A673 (cell line): ENCODE measurements at regions of chr7 and their contacts with region 1.

Region 1: GRCh38 chr7:16918288-16918895 is 36.6 kb upstream of the AGR3 start:
- DNase-seq: peak; percentile 78
- H3K4me3 ChIP-seq: no peak overlapping the region
- H3K27ac ChIP-seq: no peak overlapping the region
- H3K4me1 ChIP-seq: peaks cover 58% of the 10 kb centered on the region
- H3K27me3 ChIP-seq: no peaks in the 10 kb centered on the region
- CTCF ChIP-seq: peak; percentile 87

Region 2: DNA sequence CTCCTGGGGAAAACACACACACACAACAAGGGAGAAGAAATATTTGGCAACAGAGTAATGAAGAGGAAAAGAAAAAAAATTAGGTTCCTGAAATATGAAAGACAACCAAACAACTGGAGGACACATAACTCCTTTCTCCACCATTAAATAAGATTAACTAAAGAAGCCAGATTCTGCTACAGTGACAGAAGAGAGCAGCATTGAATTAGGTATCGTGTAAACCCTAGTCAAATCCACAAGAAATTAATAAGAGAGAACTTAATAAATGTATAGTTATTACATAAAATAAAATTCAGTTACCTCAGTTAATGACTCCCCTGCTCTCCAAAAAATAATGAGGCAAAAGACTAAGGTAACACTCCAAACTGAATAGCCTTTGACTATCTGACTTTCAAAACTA is 803.8 kb before region 1 on chr7:
- CTCF ChIA-PET with region 1: no interaction called
- POLR2A ChIA-PET with region 1: no interaction called
- intact Hi-C with region 1: loop called (anchors 10 kb)
- DNase-seq: peak; percentile 48
- H3K4me3 ChIP-seq: no peak overlapping the region
- H3K27ac ChIP-seq: no peak overlapping the region
- H3K4me1 ChIP-seq: no peaks in the 10 kb centered on the region
- H3K27me3 ChIP-seq: peaks cover 5% of the 10 kb centered on the region
- CTCF ChIP-seq: peak; percentile 71

Region 3: DNA sequence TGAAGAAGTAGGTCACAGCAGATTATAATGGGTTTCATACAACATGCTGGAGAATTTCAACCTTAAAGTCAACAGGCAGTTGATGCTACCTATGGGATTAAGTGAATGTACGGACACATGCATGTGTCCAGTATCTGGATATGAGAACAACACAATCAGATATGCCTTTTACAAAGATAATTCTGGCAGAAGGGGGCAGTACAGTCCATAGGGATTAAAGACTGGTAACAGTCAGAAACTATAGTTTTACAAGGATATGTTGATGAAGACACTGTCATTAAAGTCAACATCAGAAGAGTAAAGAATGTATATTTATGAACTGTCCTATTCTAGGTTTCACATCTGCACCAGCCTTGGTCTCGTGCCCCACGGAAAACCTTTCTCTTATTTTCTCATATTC is 314.3 kb before region 1 on chr7:
- CTCF ChIA-PET with region 1: no interaction called
- POLR2A ChIA-PET with region 1: no interaction called
- intact Hi-C with region 1: loop called (anchors 5 kb)
- DNase-seq: peak; percentile 53
- H3K4me3 ChIP-seq: no peak overlapping the region
- H3K27ac ChIP-seq: no peak overlapping the region
- H3K4me1 ChIP-seq: no peaks in the 10 kb centered on the region
- H3K27me3 ChIP-seq: no peaks in the 10 kb centered on the region
- CTCF ChIP-seq: peak; percentile 54

Region 4: GRCh38 chr7:16645593-16646471 is 272.6 kb before region 1 on chr7 and contains the starts of genes ANKMY2 and BZW2:
- CTCF ChIA-PET with region 1: no interaction called
- POLR2A ChIA-PET with region 1: no interaction called
- intact Hi-C with region 1: no loop called
- DNase-seq: peak; percentile 98
- H3K4me3 ChIP-seq: peak within 1 kb of the TSS; percentile 92
- H3K27ac ChIP-seq: peak within 1 kb of the TSS; percentile 99
- H3K4me1 ChIP-seq: peaks cover 56% of the 10 kb centered on the region
- H3K27me3 ChIP-seq: no peaks in the 10 kb centered on the region
- CTCF ChIP-seq: no peak
- total RNA-seq, gene ANKMY2: 24.3 and 30.5 TPM in 2 replicates
- total RNA-seq, gene BZW2: 173 and 175 TPM in 2 replicates

Region 5: GRCh38 chr7:16762177-16762576 is 156.2 kb before region 1 on chr7:
- CTCF ChIA-PET with region 1: no interaction called
- POLR2A ChIA-PET with region 1: no interaction called
- intact Hi-C with region 1: no loop called
- DNase-seq: no peak
- H3K4me3 ChIP-seq: no peak overlapping the region
- H3K27ac ChIP-seq: no peak overlapping the region
- H3K4me1 ChIP-seq: peaks cover 16% of the 10 kb centered on the region
- H3K27me3 ChIP-seq: no peaks in the 10 kb centered on the region
- CTCF ChIP-seq: no peak

Region 6: GRCh38 chr7:16801111-16801542 is 117.3 kb before region 1 on chr7:
- CTCF ChIA-PET with region 1: no interaction called
- POLR2A ChIA-PET with region 1: no interaction called
- intact Hi-C with region 1: loop called (anchors 1 kb)
- DNase-seq: peak; percentile 91
- H3K4me3 ChIP-seq: no peak overlapping the region
- H3K27ac ChIP-seq: no peak overlapping the region
- H3K4me1 ChIP-seq: peaks cover 8% of the 10 kb centered on the region
- H3K27me3 ChIP-seq: no peaks in the 10 kb centered on the region
- CTCF ChIP-seq: peak; percentile 69

Region 7: DNA sequence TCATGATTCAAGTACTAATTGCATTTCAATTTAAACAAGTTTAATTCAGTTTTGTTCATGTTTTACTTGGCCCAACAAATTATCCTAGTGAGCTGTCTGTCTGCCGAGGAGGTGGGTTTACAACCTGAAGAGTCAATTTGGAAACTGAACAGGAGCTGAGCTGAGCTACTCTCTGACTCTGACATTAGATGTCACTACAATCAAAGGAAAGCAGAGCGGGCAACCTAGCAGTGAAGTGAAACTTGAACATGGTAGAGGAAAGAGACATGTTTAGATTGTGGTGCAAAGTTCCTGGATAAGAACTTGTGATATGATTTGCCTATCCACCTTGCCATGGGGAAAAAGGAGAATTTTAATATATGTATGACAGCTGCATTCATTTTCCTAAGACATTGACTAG is 27.1 kb before region 1 on chr7:
- CTCF ChIA-PET with region 1: interaction called, 3 read pairs
- POLR2A ChIA-PET with region 1: no interaction called
- intact Hi-C with region 1: loop called (anchors 2 kb)
- DNase-seq: peak; percentile 80
- H3K4me3 ChIP-seq: no peak overlapping the region
- H3K27ac ChIP-seq: no peak overlapping the region
- H3K4me1 ChIP-seq: no peaks in the 10 kb centered on the region
- H3K27me3 ChIP-seq: no peaks in the 10 kb centered on the region
- CTCF ChIP-seq: peak; percentile 76

Region 8: GRCh38 chr7:17041324-17041723 is 122.9 kb after region 1 on chr7:
- CTCF ChIA-PET with region 1: no interaction called
- POLR2A ChIA-PET with region 1: no interaction called
- intact Hi-C with region 1: loop called (anchors 5 kb)
- DNase-seq: peak; percentile 97
- H3K4me3 ChIP-seq: peak overlapping the region; percentile 9
- H3K27ac ChIP-seq: peak overlapping the region; percentile 96
- H3K4me1 ChIP-seq: peaks cover 81% of the 10 kb centered on the region
- H3K27me3 ChIP-seq: no peaks in the 10 kb centered on the region
- CTCF ChIP-seq: no peak